ENCODE measurements at regions of chr2 and their contacts with region 1.

Region 1: DNA sequence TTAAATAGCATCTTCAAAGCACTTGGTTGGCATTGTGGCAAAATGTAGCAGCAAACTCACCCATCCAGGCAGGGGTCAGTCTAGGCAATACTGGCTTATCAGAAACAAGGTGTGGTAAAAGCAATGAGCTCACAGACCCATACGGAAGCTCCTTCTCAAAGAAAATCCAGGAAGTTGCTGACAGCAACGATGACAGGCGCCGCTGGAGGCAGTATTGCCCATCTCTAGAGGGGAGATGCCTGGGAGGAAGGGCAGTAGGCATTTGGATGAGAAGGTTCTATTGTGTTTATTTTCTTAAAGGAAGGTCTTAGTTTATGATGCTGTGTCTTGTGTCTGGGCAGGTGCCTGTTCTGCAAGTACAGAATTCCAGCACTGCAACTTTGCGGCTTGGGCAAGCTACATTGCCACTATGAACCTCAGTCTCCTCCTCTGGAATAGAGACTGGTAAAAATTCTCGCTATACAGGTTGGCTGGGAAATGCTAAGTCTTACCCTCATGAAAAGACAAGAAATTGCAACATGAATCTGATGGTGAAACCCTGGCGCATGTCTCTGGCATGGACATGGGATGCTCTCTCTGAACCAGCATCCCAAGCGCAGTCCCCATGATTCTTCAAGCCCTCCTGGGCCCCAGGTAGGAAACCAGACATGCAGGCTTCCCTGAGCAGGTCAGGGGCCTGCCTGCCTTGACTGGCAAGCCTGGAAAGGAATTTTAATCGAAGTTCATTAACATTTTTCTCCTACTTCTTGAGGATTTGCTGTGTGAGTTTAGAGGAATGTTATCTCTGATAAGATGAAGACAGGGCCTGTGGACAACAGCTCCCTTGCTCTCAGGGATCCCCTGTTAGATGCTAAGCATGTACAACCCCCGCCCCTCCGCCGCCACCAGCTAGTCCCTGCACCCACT is 156.0 kb downstream of the TFCP2L1 start:
- DNase-seq: peak in 1 of 2 experiments; percentile 78
- H3K4me3 ChIP-seq: no peak overlapping the region
- H3K27ac ChIP-seq: no peak overlapping the region
- H3K4me1 ChIP-seq: peaks cover 3 to 26% (median 13%) of the 10 kb centered on the region in 4 experiments
- H3K27me3 ChIP-seq: peaks cover 0 to 6% (median under 1%) of the 10 kb centered on the region in 4 experiments; a peak in 2 of 7 replicates
- CTCF ChIP-seq: peak; percentile 75 to 95 (median 80)
- EP300 ChIP-seq: no peak
- POLR2A ChIP-seq: no peak
- RAD21 ChIP-seq: peak; percentile 82 to 86

Region 2: DNA sequence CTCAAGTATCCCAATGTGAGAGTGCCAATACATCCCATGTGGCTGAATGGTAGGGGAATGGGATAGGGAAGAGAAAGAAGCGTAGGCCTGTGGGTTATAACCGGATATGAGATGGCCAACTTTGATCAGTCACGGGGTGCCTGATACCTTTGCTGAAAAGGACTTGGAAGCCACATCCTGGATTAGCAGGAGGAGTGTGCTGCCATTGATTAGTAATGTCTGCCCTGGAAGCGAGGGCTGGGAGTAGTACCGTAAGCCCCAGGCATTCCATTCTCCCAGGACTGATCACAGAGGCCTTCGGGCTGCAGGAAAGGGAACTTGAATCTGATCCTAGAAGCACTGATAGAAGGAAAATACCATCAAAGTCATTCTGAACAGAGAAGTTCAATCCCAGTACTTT is 62.5 kb before region 1 on chr2:
- CTCF ChIA-PET with region 1: no interaction called
- POLR2A ChIA-PET with region 1: no interaction called
- DNase-seq: no peak
- H3K4me3 ChIP-seq: no peak overlapping the region
- H3K27ac ChIP-seq: no peak overlapping the region
- H3K4me1 ChIP-seq: peaks cover 0 to 15% (median 9%) of the 10 kb centered on the region in 4 experiments; a peak in 6 of 7 replicates
- H3K27me3 ChIP-seq: peaks cover 0 to 12% (median 2%) of the 10 kb centered on the region in 4 experiments; a peak in 4 of 7 replicates
- CTCF ChIP-seq: no peak
- EP300 ChIP-seq: no peak
- POLR2A ChIP-seq: no peak
- RAD21 ChIP-seq: no peak

Region 3: GRCh38 chr2:121088251-121089165 is 40.5 kb before region 1 on chr2:
- CTCF ChIA-PET with region 1: interaction called, 208 read pairs
- POLR2A ChIA-PET with region 1: no interaction called
- DNase-seq: no peak
- H3K4me3 ChIP-seq: no peak overlapping the region
- H3K27ac ChIP-seq: no peak overlapping the region
- H3K4me1 ChIP-seq: no peaks in the 10 kb centered on the region
- H3K27me3 ChIP-seq: no peaks in the 10 kb centered on the region; a peak in 2 of 7 replicates
- CTCF ChIP-seq: no peak
- EP300 ChIP-seq: no peak
- POLR2A ChIP-seq: no peak
- RAD21 ChIP-seq: no peak

Region 4: DNA sequence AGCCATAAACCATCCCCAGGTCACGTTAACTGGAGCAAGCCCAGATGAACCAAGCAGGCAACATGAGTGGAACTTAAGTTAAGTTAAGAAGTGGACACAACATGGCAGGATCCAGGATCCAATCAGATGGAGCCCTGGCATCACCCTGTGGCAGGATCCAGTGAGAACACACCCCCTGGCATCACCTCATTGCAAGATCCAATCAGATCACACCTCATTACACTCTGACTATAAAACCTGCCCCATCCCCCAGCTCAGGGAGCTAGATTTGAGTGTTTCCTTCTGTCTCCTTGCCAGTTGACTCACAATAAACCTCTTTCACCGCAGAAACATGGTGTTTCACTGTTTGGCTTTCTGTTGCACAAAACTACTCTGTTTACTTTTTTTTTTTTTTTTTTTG is 16.4 kb before region 1 on chr2:
- CTCF ChIA-PET with region 1: interaction called, 11 read pairs
- POLR2A ChIA-PET with region 1: no interaction called
- DNase-seq: no peak
- H3K4me3 ChIP-seq: no peak overlapping the region
- H3K27ac ChIP-seq: no peak overlapping the region
- H3K4me1 ChIP-seq: no peaks in the 10 kb centered on the region
- H3K27me3 ChIP-seq: no peaks in the 10 kb centered on the region
- CTCF ChIP-seq: no peak
- EP300 ChIP-seq: no peak
- POLR2A ChIP-seq: no peak
- RAD21 ChIP-seq: no peak

Region 5: DNA sequence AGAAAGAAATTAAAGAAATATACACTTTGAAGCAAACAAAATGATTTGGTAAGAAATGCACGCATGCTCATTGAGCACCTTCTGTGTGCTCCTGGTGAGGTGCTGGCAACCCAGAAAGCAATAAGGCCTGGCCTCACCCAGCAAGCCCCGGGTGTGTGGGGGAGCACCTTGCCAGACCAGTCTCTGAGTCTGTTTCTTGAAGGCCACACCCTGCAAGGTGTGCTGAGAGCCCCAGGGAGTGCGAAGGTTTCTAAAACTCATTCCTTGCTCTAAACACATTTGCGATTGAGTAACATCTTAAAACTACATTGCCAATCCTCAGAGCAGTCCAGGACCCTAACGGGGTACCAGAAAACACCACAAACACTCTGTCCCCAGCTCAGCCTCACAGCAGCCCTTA is 22.7 kb after region 1 on chr2:
- CTCF ChIA-PET with region 1: interaction called, 10 read pairs
- POLR2A ChIA-PET with region 1: interaction called, 4 read pairs
- DNase-seq: no peak
- H3K4me3 ChIP-seq: no peak overlapping the region
- H3K27ac ChIP-seq: no peak overlapping the region
- H3K4me1 ChIP-seq: no peaks in the 10 kb centered on the region
- H3K27me3 ChIP-seq: peaks cover 0 to 3% (median 0%) of the 10 kb centered on the region in 4 experiments; a peak in 1 of 7 replicates
- CTCF ChIP-seq: no peak
- EP300 ChIP-seq: no peak
- POLR2A ChIP-seq: no peak
- RAD21 ChIP-seq: no peak

Region 6: GRCh38 chr2:121297217-121297830 is 168.3 kb after region 1 on chr2:
- CTCF ChIA-PET with region 1: interaction called, 17 read pairs
- POLR2A ChIA-PET with region 1: interaction called, 3 read pairs
- DNase-seq: no peak
- H3K4me3 ChIP-seq: no peak overlapping the region
- H3K27ac ChIP-seq: no peak overlapping the region
- H3K4me1 ChIP-seq: no peaks in the 10 kb centered on the region
- H3K27me3 ChIP-seq: peaks cover 0 to 1% (median 0%) of the 10 kb centered on the region in 4 experiments; a peak in 1 of 7 replicates
- CTCF ChIP-seq: peak; percentile 48 to 95 (median 95); a peak in 3 of 4 replicates
- EP300 ChIP-seq: no peak
- POLR2A ChIP-seq: no peak
- RAD21 ChIP-seq: peak; percentile 59 to 60

Region 7: GRCh38 chr2:121333834-121334558 is 205.0 kb after region 1 on chr2:
- CTCF ChIA-PET with region 1: interaction called, 23 read pairs
- POLR2A ChIA-PET with region 1: no interaction called
- DNase-seq: no peak
- H3K4me3 ChIP-seq: no peak overlapping the region
- H3K27ac ChIP-seq: no peak overlapping the region
- H3K4me1 ChIP-seq: peaks cover 0 to 11% (median 8%) of the 10 kb centered on the region in 4 experiments; a peak in 5 of 7 replicates
- H3K27me3 ChIP-seq: no peaks in the 10 kb centered on the region
- CTCF ChIP-seq: no peak
- EP300 ChIP-seq: no peak
- POLR2A ChIP-seq: no peak
- RAD21 ChIP-seq: no peak